Panc1 (cell line): ENCODE measurements at regions of chrX and their contacts with region 1.

Region 1: GRCh38 chrX:68828740-68829552 is at the start of gene EFNB1:
- DNase-seq: peak; percentile 67
- ATAC-seq: peak; percentile 91
- H3K4me3 ChIP-seq: peak within 1 kb of the TSS; percentile 58 to 72
- H3K27ac ChIP-seq: peak within 1 kb of the TSS; percentile 72
- H3K4me1 ChIP-seq: no peaks in the 10 kb centered on the region; the same call in none of the 2 replicates
- H3K27me3 ChIP-seq: no peaks in the 10 kb centered on the region
- CTCF ChIP-seq: no peak
- total RNA-seq, gene EFNB1: 12.9 TPM

Region 2: GRCh38 chrX:68878977-68879645 is 50.2 kb after region 1 on chrX:
- CTCF ChIA-PET with region 1: no interaction called
- POLR2A ChIA-PET with region 1: no interaction called
- in situ Hi-C with region 1: no loop called
- intact Hi-C with region 1: no loop called
- DNase-seq: no peak
- ATAC-seq: no peak
- H3K4me3 ChIP-seq: no peak overlapping the region
- H3K27ac ChIP-seq: no peak overlapping the region
- H3K4me1 ChIP-seq: no peaks in the 10 kb centered on the region
- H3K27me3 ChIP-seq: no peaks in the 10 kb centered on the region
- CTCF ChIP-seq: no peak

Region 3: GRCh38 chrX:69133921-69134542 is 305.1 kb after region 1 on chrX:
- CTCF ChIA-PET with region 1: interaction called, 3 read pairs
- POLR2A ChIA-PET with region 1: no interaction called
- in situ Hi-C with region 1: no loop called
- intact Hi-C with region 1: loop called (anchors 10 kb)
- DNase-seq: no peak
- ATAC-seq: peak; percentile 96
- H3K4me3 ChIP-seq: no peak overlapping the region
- H3K27ac ChIP-seq: no peak overlapping the region
- H3K4me1 ChIP-seq: no peaks in the 10 kb centered on the region
- H3K27me3 ChIP-seq: no peaks in the 10 kb centered on the region
- CTCF ChIP-seq: peak; percentile 73

Region 4: DNA sequence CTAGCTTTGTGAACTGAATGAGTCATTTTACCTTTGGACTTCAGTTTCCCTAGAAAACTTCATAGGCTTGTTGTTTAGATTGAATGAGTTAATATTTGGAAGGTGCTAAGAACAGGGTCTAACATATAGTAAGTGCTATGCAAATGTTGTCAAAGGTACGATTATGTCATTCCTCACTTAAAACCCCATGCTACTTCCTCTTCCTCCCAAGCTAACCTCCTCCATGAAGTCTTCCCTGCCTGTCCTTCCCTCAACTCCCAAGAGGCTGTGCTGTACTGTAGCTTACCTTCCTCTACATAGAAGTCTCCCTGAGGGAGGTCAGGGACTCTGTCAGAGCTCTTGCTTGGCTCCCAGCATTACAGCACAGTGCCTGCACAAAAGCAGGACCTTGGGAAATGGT is 439.7 kb after region 1 on chrX:
- CTCF ChIA-PET with region 1: interaction called, 10 read pairs
- POLR2A ChIA-PET with region 1: no interaction called
- in situ Hi-C with region 1: no loop called
- intact Hi-C with region 1: no loop called
- DNase-seq: no peak
- ATAC-seq: no peak
- H3K4me3 ChIP-seq: no peak overlapping the region
- H3K27ac ChIP-seq: no peak overlapping the region
- H3K4me1 ChIP-seq: no peaks in the 10 kb centered on the region
- H3K27me3 ChIP-seq: no peaks in the 10 kb centered on the region
- CTCF ChIP-seq: no peak

Region 5: GRCh38 chrX:69387567-69388487 is 558.9 kb after region 1 on chrX:
- CTCF ChIA-PET with region 1: no interaction called
- POLR2A ChIA-PET with region 1: no interaction called
- in situ Hi-C with region 1: no loop called
- intact Hi-C with region 1: loop called (anchors 1 kb)
- DNase-seq: no peak
- ATAC-seq: peak; percentile 89
- H3K4me3 ChIP-seq: no peak overlapping the region
- H3K27ac ChIP-seq: no peak overlapping the region
- H3K4me1 ChIP-seq: no peaks in the 10 kb centered on the region; the same call in 1 of the 2 replicates
- H3K27me3 ChIP-seq: peaks cover 3% of the 10 kb centered on the region; the same call in 1 of the 2 replicates
- CTCF ChIP-seq: peak; percentile 86